CD4-positive, alpha-beta T cell (primary cell): ENCODE measurements at regions of chr14 and their contacts with region 1.

Region 1: DNA sequence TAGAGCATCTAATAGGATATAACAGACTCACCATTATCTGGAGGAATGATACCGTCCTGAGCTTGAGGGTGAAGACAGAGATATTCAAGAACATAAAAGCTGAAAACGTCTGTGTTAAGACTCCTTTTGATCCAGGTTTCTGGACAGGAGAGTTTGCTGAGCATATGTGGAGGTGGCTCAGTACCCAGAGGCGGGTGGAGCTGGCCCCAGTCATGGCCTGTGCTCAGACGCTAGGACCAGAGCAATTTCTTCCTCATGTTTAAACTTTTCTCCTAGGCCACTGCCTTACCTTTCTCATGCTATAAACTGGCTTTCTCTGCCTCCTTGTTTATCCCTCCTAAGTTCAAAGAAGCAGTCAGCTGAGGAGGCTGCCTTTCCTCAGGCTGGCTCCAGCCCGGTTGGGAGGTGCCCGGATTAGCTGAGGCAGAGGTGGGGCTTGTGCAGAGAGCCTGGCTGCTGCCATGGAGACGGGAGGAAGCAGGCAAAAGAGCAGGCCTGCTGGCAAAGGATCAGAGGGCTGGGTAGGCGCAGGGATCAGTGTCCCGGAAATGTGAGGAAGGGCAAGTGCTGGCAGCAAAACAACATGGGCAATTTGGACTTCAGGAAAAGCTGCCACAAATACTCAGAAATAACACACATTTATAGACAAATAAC is 13.7 kb downstream of the COA8 start:
- DNase-seq: no peak
- ATAC-seq: no peak
- H3K4me3 ChIP-seq: no peak overlapping the region
- H3K4me3 Mint-ChIP-seq: no peak overlapping the region
- H3K27ac ChIP-seq: no peak overlapping the region
- H3K27ac Mint-ChIP-seq: no peak overlapping the region
- H3K4me1 ChIP-seq: no peaks in the 10 kb centered on the region
- H3K4me1 Mint-ChIP-seq: no peaks in the 10 kb centered on the region
- H3K27me3 ChIP-seq: no peaks in the 10 kb centered on the region
- H3K27me3 Mint-ChIP-seq: no peaks in the 10 kb centered on the region
- CTCF ChIP-seq: no peak

Region 2: GRCh38 chr14:103679351-103679750 is 102.9 kb after region 1 on chr14:
- CTCF ChIA-PET with region 1: no interaction called
- POLR2A ChIA-PET with region 1: no interaction called
- intact Hi-C with region 1: loop called (anchors 1 kb)
- DNase-seq: peak in 12 of 14 experiments; percentile 18 to 64 (median 29)
- ATAC-seq: peak; percentile 86
- H3K4me3 ChIP-seq: no peak overlapping the region
- H3K4me3 Mint-ChIP-seq: no peak overlapping the region
- H3K27ac ChIP-seq: no peak overlapping the region
- H3K27ac Mint-ChIP-seq: peak overlapping the region; percentile 9
- H3K4me1 ChIP-seq: no peaks in the 10 kb centered on the region
- H3K4me1 Mint-ChIP-seq: peaks cover 8% of the 10 kb centered on the region
- H3K27me3 ChIP-seq: no peaks in the 10 kb centered on the region
- H3K27me3 Mint-ChIP-seq: no peaks in the 10 kb centered on the region
- CTCF ChIP-seq: peak; percentile 32

Region 3: DNA sequence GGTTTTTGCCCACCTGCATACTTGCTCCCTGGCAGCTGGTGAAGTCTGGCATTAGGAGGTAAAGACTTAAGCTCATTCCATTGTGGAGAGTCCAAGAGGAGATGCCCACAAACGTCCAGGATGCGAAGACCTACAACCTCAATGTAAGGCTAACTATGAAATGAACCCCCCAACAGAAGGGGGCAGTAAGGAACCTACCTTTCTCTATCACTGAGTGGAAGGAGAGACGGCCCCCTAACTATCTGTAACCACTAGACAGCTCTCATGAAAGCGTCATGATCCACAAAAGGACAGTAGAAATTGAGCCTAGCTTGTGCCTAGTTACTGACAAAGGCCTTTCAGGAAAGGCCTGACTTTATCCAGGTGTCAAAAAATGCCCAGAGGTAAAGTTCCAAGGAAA is 194.4 kb after region 1 on chr14:
- CTCF ChIA-PET with region 1: no interaction called
- POLR2A ChIA-PET with region 1: no interaction called
- intact Hi-C with region 1: loop called in 1 of 2 experiments (anchors 10 kb)
- DNase-seq: no peak
- ATAC-seq: no peak
- H3K4me3 ChIP-seq: no peak overlapping the region
- H3K4me3 Mint-ChIP-seq: no peak overlapping the region
- H3K27ac ChIP-seq: no peak overlapping the region
- H3K27ac Mint-ChIP-seq: no peak overlapping the region
- H3K4me1 ChIP-seq: no peaks in the 10 kb centered on the region
- H3K4me1 Mint-ChIP-seq: no peaks in the 10 kb centered on the region
- H3K27me3 ChIP-seq: no peaks in the 10 kb centered on the region
- H3K27me3 Mint-ChIP-seq: no peaks in the 10 kb centered on the region
- CTCF ChIP-seq: no peak

Region 4: DNA sequence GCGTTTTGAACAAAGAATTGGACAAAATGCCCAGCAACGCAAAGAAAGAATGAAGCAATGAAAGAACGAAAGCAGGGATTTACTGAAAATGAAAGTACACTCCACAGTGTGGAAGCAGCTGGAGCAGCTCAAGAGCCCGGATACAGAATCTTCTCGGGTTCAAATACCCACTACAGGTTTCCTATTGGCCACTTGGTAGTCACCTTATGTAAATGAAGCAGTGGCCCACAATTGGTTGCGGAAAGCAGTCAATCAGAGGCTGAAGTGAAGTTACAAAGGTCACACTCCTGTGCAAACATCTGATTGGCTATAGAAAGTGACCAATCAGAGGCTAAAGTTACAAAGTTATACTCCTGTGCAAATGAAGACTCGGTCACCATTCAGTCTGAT is 285.9 kb after region 1 on chr14:
- CTCF ChIA-PET with region 1: no interaction called
- POLR2A ChIA-PET with region 1: no interaction called
- intact Hi-C with region 1: no loop called
- DNase-seq: no peak
- ATAC-seq: no peak
- H3K4me3 ChIP-seq: no peak overlapping the region
- H3K4me3 Mint-ChIP-seq: no peak overlapping the region
- H3K27ac ChIP-seq: no peak overlapping the region
- H3K27ac Mint-ChIP-seq: no peak overlapping the region
- H3K4me1 ChIP-seq: no peaks in the 10 kb centered on the region
- H3K4me1 Mint-ChIP-seq: no peaks in the 10 kb centered on the region
- H3K27me3 ChIP-seq: no peaks in the 10 kb centered on the region
- H3K27me3 Mint-ChIP-seq: peaks cover 12% of the 10 kb centered on the region
- CTCF ChIP-seq: no peak